PC-9 (cell line): ENCODE measurements at regions of chr14 and their contacts with region 1.

Region 1: DNA sequence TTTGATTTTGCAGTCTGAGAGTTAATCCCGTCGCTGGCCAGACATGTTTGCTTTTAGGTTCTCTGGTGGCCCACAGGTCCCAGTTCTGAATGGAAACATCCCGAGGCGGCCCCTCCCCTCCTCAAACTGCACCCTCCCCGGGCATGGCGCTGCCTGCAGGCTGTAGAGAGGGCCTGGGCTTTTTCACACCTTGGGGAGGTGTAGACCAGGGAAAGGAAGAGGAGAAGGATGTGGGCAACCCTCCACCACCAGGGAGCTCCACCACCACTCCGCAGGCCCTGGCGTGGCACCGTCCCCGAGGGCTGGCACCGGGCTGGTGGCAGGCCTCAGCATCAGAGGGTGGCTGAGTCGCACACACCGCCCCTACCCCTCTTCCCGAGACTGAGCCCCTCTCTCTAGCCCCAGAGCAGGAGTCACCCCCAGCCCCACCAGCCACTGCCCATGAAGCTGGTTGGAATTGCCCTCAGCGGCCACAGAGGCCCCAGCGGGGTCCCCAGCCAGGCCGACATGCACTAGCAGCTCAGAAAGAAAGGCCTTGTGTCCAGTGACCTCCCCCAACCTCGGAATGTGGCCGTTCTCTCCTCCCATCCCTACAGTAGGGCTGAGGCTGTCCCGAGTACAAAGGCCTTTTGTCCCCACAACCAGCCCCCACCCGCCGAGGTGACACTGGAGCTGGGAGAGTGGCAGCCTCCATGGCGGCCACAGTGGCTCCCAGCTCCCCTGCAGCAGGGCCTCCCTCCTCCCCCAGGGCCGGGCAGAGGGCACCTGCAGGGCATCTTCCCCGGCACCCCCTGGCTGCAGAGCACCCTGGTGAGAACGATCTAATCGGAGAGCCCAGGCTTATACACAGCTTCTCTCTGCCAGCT is 23.5 kb upstream of the INF2 start:
- DNase-seq: peak; percentile 50 to 77
- H3K4me3 ChIP-seq: no peak overlapping the region
- H3K27ac ChIP-seq: no peak overlapping the region
- H3K4me1 ChIP-seq: peaks cover 14% of the 10 kb centered on the region
- H3K27me3 ChIP-seq: 0 out of 2 replicates have a peak, but pooled peaks cover 5% of the 10 kb centered on the region
- CTCF ChIP-seq: peak; percentile 51; the same call in 1 of the 2 replicates

Region 2: DNA sequence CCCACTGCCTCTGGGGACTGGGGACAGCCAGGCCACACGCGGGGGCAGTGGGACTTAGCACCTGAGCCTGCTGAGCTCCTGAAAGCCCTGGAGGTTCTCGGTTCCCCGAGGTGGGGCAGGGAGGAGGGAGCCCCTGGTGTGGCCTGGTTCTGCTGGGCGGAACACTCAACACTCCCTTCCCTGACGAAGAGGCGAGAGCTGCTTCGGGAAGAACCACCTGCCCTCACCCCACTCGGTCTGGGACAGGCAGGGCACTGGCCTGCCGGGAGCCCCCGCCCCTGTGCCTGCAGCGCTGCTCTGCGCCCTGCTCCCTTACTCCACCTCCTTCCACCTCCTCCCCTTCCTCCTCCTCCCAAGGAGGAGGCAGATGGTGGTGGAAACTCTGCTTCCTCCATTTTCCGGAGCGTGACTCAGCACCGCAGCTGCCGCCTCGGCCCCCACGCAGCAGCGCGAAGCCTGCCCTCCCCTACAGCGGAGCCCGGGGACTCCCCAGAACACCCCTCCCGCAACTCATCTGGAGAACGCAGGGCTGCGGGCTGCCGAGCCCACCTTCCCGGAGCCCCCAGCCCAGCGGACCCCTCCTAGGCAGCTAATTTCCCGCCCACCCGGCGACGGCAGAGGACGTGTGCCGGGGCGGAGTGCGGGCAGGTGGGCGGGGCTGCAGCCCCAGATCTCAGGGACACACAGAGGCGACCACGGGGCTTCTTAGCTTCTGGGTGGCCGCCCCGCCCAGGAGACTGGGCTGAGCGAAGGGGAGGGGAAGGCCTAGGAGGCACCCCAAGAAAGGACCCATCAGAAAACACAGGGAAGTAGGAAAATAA is 11.8 kb after region 1 on chr14:
- CTCF ChIA-PET with region 1: interaction called, 11 read pairs
- POLR2A ChIA-PET with region 1: interaction called, 25 read pairs
- intact Hi-C with region 1: loop called (anchors 1 kb)
- DNase-seq: peak; percentile 66 to 83
- H3K4me3 ChIP-seq: peak overlapping the region; percentile 68
- H3K27ac ChIP-seq: peak overlapping the region; percentile 91
- H3K4me1 ChIP-seq: peaks cover 48% of the 10 kb centered on the region
- H3K27me3 ChIP-seq: no peaks in the 10 kb centered on the region
- CTCF ChIP-seq: no peak

Region 3: GRCh38 chr14:104708606-104709268 is 42.8 kb after region 1 on chr14:
- CTCF ChIA-PET with region 1: no interaction called
- POLR2A ChIA-PET with region 1: no interaction called
- intact Hi-C with region 1: loop called (anchors 5 kb)
- DNase-seq: peak in 1 of 2 experiments; percentile 60
- H3K4me3 ChIP-seq: no peak overlapping the region
- H3K27ac ChIP-seq: no peak overlapping the region
- H3K4me1 ChIP-seq: no peaks in the 10 kb centered on the region
- H3K27me3 ChIP-seq: no peaks in the 10 kb centered on the region
- CTCF ChIP-seq: peak; percentile 98

Region 4: DNA sequence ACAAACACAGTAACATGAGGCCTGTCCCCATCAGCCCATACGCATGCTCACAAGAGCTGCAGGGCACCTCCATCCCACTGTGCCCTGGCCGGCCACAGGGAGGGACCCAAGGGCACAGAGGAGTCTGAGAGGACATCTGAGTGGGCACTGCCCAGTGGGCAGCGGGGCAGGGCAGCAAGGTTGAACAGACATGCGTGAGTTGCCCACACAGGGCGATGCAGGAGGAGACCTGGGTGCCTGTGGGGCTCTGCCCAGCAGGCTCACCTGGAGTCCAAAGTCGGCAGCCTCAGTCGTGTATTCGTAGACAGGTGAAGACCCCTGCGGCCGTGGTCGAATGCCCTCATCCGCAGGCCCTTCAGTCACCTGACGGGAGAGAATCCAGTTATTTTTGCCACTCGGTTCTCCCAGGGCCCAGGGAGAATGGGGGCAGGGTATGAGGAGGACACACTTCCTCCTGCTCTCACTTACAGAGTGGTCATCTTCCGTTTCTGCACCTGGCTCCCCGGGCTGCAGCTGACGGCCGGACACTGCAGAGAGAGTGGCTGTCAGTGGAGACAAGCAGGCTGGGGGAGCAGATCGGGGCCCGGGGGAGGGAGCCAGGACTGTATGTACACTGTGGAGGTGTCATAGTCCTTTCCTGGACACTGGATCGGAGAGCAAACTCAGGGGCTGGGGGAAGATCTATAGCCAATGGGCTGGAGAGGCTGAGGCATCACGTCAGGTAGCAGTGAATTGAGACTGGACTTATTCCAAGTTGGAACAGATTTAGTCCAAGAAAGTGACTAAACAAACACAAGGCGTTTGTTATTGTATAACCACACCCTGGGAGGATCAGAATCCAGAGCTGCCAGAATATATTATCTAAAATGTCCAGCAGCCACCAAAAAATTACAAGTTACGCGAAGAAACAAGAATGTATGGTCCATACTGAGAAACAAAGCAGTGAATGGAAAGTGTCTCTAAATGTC is 291.5 kb after region 1 on chr14:
- CTCF ChIA-PET with region 1: no interaction called
- POLR2A ChIA-PET with region 1: no interaction called
- intact Hi-C with region 1: no loop called
- DNase-seq: no peak
- H3K4me3 ChIP-seq: no peak overlapping the region
- H3K27ac ChIP-seq: no peak overlapping the region
- H3K4me1 ChIP-seq: no peaks in the 10 kb centered on the region
- H3K27me3 ChIP-seq: no peaks in the 10 kb centered on the region
- CTCF ChIP-seq: no peak

Region 5: GRCh38 chr14:105351920-105352851 is 686.3 kb after region 1 on chr14:
- CTCF ChIA-PET with region 1: no interaction called
- POLR2A ChIA-PET with region 1: no interaction called
- intact Hi-C with region 1: loop called (anchors 5 kb)
- DNase-seq: peak; percentile 79 to 83
- H3K4me3 ChIP-seq: no peak overlapping the region
- H3K27ac ChIP-seq: no peak overlapping the region
- H3K4me1 ChIP-seq: no peaks in the 10 kb centered on the region
- H3K27me3 ChIP-seq: no peaks in the 10 kb centered on the region
- CTCF ChIP-seq: peak; percentile 85